GM18951 (cell line): ENCODE measurements at regions of chr14 and their contacts with region 1.

Region 1: GRCh38 chr14:96117100-96117897 is 78.1 kb downstream of the C14orf132 start:
- POLR2A ChIP-seq: no peak

Region 2: GRCh38 chr14:96268431-96269358 is 151.4 kb after region 1 on chr14:
- in situ Hi-C with region 1: loop called (anchors 10 kb)
- POLR2A ChIP-seq: no peak